ENCODE measurements at regions of chr16 and their contacts with region 1.

Region 1: DNA sequence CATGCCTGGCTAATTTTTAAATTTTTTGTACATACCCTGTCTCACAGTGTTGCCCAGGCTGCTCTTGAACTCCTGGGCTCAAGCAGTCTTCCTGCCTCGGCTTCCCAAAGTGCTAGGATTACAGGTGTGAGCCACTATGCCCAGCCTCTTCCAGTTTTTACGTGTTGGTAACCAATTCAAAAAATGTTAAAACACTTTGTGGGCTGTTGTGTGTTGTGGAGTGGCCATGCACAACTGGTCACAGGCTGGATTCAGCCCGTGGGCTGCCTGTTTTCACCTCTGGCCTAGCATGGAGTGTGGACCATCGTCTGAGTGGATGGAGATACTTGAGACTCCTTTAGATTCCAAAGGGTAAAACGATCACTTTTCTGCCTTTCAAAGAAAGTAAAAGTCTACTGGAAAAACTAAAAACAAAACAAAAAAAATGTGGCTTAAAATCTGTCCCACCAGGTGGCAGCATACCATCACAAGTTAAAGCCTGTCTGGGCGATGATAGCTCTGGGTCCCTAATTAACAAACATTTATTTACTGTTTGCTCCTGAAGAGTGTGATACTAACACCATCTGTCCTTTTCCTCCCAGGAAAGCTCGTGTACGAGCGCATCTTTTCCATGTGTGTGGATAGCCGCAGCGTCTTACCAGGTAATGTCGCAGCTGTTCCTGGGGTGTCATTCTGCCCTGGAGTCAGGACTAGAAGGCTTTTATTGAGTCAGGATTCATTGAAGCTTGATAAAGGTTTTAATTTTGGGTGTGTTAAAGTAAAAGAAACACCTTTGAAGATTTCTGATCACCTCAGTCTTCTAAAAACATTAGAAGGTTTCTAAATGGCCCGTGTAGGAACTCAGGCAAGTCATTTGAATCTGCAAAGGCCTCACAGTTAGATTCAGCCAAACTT is 45.8 kb downstream of the VPS35L start:
- DNase-seq: no peak
- H3K4me3 ChIP-seq: no peak overlapping the region
- H3K27ac ChIP-seq: no peak overlapping the region
- H3K27me3 ChIP-seq: no peaks in the 10 kb centered on the region
- CTCF ChIP-seq: peak; percentile 65

Region 2: GRCh38 chr16:19583665-19584300 is 17.5 kb before region 1 on chr16:
- CTCF ChIA-PET with region 1: interaction called, 99 read pairs
- POLR2A ChIA-PET with region 1: interaction called, 7 read pairs
- DNase-seq: peak; percentile 18
- H3K4me3 ChIP-seq: no peak overlapping the region
- H3K27ac ChIP-seq: no peak overlapping the region
- H3K27me3 ChIP-seq: no peaks in the 10 kb centered on the region
- CTCF ChIP-seq: peak; percentile 94

Region 3: GRCh38 chr16:19589771-19590302 is 11.5 kb before region 1 on chr16:
- CTCF ChIA-PET with region 1: interaction called, 99 read pairs
- POLR2A ChIA-PET with region 1: interaction called, 7 read pairs
- DNase-seq: peak; percentile 71
- H3K4me3 ChIP-seq: no peak overlapping the region
- H3K27ac ChIP-seq: peak overlapping the region; percentile 88
- H3K27me3 ChIP-seq: no peaks in the 10 kb centered on the region
- CTCF ChIP-seq: no peak

Region 4: GRCh38 chr16:19639986-19640421 is 38.7 kb after region 1 on chr16:
- CTCF ChIA-PET with region 1: interaction called, 10 read pairs
- POLR2A ChIA-PET with region 1: no interaction called
- DNase-seq: no peak
- H3K4me3 ChIP-seq: no peak overlapping the region
- H3K27ac ChIP-seq: no peak overlapping the region
- H3K27me3 ChIP-seq: no peaks in the 10 kb centered on the region
- CTCF ChIP-seq: no peak

Measured in AG04450 (cell line).